B cell (primary cell): ENCODE measurements at regions of chr2 and their contacts with region 1.

Region 1: GRCh38 chr2:11129598-11130449 is 25.4 kb upstream of the SLC66A3 start:
- DNase-seq: peak; percentile 83
- ATAC-seq: peak; percentile 85
- H3K4me3 ChIP-seq: peak overlapping the region; percentile 35 to 60 (median 52)
- H3K4me3 Mint-ChIP-seq: peak overlapping the region; percentile 83
- H3K27ac ChIP-seq: peak overlapping the region; percentile 8 to 34
- H3K27ac Mint-ChIP-seq: peak overlapping the region; percentile 80
- H3K4me1 ChIP-seq: peaks cover 24 to 38% of the 10 kb centered on the region in 2 donors
- H3K4me1 Mint-ChIP-seq: peaks cover 36% of the 10 kb centered on the region
- H3K27me3 ChIP-seq: peaks cover 0 to 15% (median 2%) of the 10 kb centered on the region in 4 experiments
- H3K27me3 Mint-ChIP-seq: peaks cover 4% of the 10 kb centered on the region
- CTCF ChIP-seq: peak; percentile 22

Region 2: GRCh38 chr2:10832203-10832936 is 297.5 kb before region 1 on chr2:
- CTCF ChIA-PET with region 1: interaction called, 18 read pairs
- POLR2A ChIA-PET with region 1: no interaction called
- intact Hi-C with region 1: loop called (anchors 2 kb)
- DNase-seq: peak; percentile 82
- ATAC-seq: peak; percentile 84
- H3K4me3 ChIP-seq: no peak overlapping the region
- H3K4me3 Mint-ChIP-seq: peak overlapping the region; percentile 15
- H3K27ac ChIP-seq: no peak overlapping the region
- H3K27ac Mint-ChIP-seq: no peak overlapping the region
- H3K4me1 ChIP-seq: peaks cover 10 to 12% of the 10 kb centered on the region in 2 donors
- H3K4me1 Mint-ChIP-seq: peaks cover 8% of the 10 kb centered on the region
- H3K27me3 ChIP-seq: peaks cover 0 to 42% (median 8%) of the 10 kb centered on the region in 4 experiments
- H3K27me3 Mint-ChIP-seq: peaks cover 43% of the 10 kb centered on the region
- CTCF ChIP-seq: peak; percentile 98

Region 3: GRCh38 chr2:11154923-11155380 is 25.1 kb after region 1 on chr2:
- CTCF ChIA-PET with region 1: interaction called, 35 read pairs
- POLR2A ChIA-PET with region 1: interaction called, 11 read pairs
- intact Hi-C with region 1: loop called (anchors 1 kb)
- DNase-seq: peak; percentile 96
- ATAC-seq: peak; percentile 89
- H3K4me3 ChIP-seq: peak overlapping the region; percentile 30 to 87 (median 81)
- H3K4me3 Mint-ChIP-seq: peak overlapping the region; percentile 88
- H3K27ac ChIP-seq: peak overlapping the region; percentile 89 to 93
- H3K27ac Mint-ChIP-seq: peak overlapping the region; percentile 93
- H3K4me1 ChIP-seq: peaks cover 15 to 20% of the 10 kb centered on the region in 2 donors
- H3K4me1 Mint-ChIP-seq: peaks cover 18% of the 10 kb centered on the region
- H3K27me3 ChIP-seq: peaks cover 0 to 5% (median 0%) of the 10 kb centered on the region in 4 experiments
- H3K27me3 Mint-ChIP-seq: no peaks in the 10 kb centered on the region
- CTCF ChIP-seq: no peak

Region 4: DNA sequence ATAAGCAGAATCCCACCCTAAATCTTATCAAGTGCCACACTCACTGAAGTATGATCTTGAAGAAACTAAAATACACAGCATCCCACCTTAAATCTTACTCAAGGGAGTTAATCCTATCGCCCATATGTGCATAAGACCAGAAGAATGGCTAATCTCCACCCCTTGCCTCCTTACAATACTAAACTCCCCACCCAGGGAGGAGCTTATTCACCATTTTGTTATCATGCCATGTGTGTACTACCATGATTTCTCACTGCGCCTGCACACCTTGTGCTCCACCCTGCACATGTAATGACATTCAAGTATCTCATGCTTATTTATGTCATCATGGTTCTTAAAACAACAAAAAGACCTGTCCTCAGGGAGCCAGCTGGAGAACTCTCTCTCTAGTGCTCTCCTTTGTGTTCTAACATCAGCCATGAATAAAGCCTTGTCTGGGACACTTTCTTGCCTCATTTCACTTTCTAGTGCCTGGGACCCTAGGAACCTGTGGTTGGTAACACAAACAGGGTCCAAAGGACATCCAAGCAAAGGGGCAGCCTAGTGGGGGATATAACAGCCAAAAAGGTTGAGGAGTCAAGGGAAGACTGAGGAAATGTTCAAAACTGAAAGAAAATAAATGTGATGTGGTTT is 112.8 kb after region 1 on chr2:
- CTCF ChIA-PET with region 1: no interaction called
- POLR2A ChIA-PET with region 1: no interaction called
- intact Hi-C with region 1: no loop called
- DNase-seq: no peak
- ATAC-seq: no peak
- H3K4me3 ChIP-seq: no peak overlapping the region
- H3K4me3 Mint-ChIP-seq: no peak overlapping the region
- H3K27ac ChIP-seq: no peak overlapping the region
- H3K27ac Mint-ChIP-seq: no peak overlapping the region
- H3K4me1 ChIP-seq: no peaks in the 10 kb centered on the region
- H3K4me1 Mint-ChIP-seq: peaks cover 9% of the 10 kb centered on the region
- H3K27me3 ChIP-seq: no peaks in the 10 kb centered on the region
- H3K27me3 Mint-ChIP-seq: no peaks in the 10 kb centered on the region
- CTCF ChIP-seq: no peak

Region 5: GRCh38 chr2:11411768-11412448 is 282.1 kb after region 1 on chr2:
- CTCF ChIA-PET with region 1: interaction called, 48 read pairs
- POLR2A ChIA-PET with region 1: no interaction called
- intact Hi-C with region 1: no loop called
- DNase-seq: peak; percentile 22
- ATAC-seq: no peak
- H3K4me3 ChIP-seq: peak overlapping the region in 1 of 5 experiments; percentile 15
- H3K4me3 Mint-ChIP-seq: no peak overlapping the region
- H3K27ac ChIP-seq: no peak overlapping the region
- H3K27ac Mint-ChIP-seq: no peak overlapping the region
- H3K4me1 ChIP-seq: no peaks in the 10 kb centered on the region
- H3K4me1 Mint-ChIP-seq: no peaks in the 10 kb centered on the region
- H3K27me3 ChIP-seq: peaks cover 0 to 14% (median 5%) of the 10 kb centered on the region in 4 experiments
- H3K27me3 Mint-ChIP-seq: peaks cover 28% of the 10 kb centered on the region
- CTCF ChIP-seq: peak; percentile 34

Region 6: GRCh38 chr2:11583840-11584524 is 454.2 kb after region 1 on chr2:
- CTCF ChIA-PET with region 1: interaction called, 51 read pairs
- POLR2A ChIA-PET with region 1: no interaction called
- intact Hi-C with region 1: no loop called
- DNase-seq: peak; percentile 49
- ATAC-seq: peak; percentile 49
- H3K4me3 ChIP-seq: no peak overlapping the region
- H3K4me3 Mint-ChIP-seq: no peak overlapping the region
- H3K27ac ChIP-seq: no peak overlapping the region
- H3K27ac Mint-ChIP-seq: no peak overlapping the region
- H3K4me1 ChIP-seq: no peaks in the 10 kb centered on the region
- H3K4me1 Mint-ChIP-seq: no peaks in the 10 kb centered on the region
- H3K27me3 ChIP-seq: peaks cover 0 to 12% (median 3%) of the 10 kb centered on the region in 4 experiments
- H3K27me3 Mint-ChIP-seq: peaks cover 16% of the 10 kb centered on the region
- CTCF ChIP-seq: peak; percentile 68